Heart left ventricle (tissue), 16 donors: ENCODE measurements at regions of chr9 and their contacts with region 1.

Region 1: DNA sequence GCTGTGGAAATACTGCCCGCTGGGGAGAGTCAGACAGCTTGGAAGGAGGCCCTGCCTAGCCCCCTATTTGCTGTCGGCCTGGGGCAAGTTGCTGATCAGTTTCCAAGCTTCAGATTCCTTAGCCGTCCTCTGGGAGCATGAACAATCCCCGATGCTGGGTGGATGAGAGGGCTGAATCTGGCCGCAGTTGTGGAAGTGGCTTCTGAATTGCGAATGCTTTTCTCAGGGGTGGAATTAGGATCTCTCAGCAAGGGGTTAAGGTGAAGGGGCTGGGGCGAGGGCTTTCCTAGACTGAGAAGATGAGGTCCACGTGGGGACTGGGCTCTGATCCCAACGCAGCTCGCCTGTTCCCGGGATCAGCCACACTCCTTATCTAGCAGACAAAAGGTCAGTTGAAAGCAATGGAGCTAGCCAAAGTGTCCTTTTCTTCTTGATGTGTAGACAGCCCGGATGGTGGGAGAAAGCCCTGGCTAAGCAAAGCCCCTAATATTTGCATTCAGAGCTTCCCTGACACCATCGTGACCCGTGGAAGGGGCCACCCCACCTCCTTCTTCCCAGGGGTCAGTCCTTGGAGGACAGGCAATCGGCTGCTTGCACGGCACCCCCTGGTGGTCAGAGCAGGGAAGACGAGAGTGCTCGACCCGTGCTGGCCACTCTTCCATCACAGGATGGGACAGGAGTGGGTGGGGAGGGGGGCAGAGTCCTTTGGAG is 54.9 kb downstream of the COL15A1 start:
- DNase-seq: peak; percentile 86 to 92 (median 91)
- ATAC-seq: peak; percentile 83 to 87 (median 85)
- H3K4me3 ChIP-seq: peak overlapping the region in 2 of 12 donors; percentile 5 to 10
- H3K27ac ChIP-seq: peak overlapping the region; percentile 55 to 89 (median 78)
- H3K4me1 ChIP-seq: peaks cover 4 to 74% (median 56%) of the 10 kb centered on the region in 12 donors
- H3K27me3 ChIP-seq: no peaks in the 10 kb centered on the region
- CTCF ChIP-seq: peak; percentile 80 to 96 (median 91)
- POLR2A ChIP-seq: no peak

Region 2: DNA sequence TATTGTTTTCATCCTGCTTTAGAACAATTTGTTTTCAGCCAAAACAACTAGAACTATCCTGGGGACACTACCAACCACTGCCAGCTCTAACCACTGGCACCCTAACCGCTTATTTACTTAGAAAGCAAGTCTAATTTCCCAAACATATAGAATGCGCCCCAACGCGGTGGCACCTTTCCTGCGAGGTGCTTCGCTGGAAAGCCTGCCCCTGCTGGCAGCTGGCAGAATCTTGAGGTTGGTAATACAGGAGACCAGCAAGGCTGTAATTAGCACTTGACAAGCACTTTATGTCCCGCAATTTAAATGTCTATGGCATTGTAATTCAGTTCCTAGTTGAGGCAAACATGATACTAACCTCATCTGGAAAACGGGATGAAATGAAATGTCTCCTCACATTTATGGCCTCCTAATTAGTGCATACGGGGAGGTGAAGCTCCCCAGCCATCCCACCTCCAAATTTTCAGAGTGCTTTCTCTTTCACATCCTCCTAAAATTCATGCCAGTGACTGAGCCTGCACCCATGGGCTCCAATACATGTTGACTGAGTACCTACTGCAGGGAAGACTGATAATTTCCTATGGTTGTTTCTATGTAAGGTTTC is 320.3 kb before region 1 on chr9:
- intact Hi-C with region 1: no loop called
- DNase-seq: no peak
- ATAC-seq: no peak
- H3K4me3 ChIP-seq: no peak overlapping the region
- H3K27ac ChIP-seq: no peak overlapping the region
- H3K4me1 ChIP-seq: no peaks in the 10 kb centered on the region
- H3K27me3 ChIP-seq: peaks cover 0 to 7% (median 0%) of the 10 kb centered on the region in 9 donors
- CTCF ChIP-seq: peak in 8 of 12 donors; percentile 7 to 33 (median 25)
- POLR2A ChIP-seq: no peak

Region 3: DNA sequence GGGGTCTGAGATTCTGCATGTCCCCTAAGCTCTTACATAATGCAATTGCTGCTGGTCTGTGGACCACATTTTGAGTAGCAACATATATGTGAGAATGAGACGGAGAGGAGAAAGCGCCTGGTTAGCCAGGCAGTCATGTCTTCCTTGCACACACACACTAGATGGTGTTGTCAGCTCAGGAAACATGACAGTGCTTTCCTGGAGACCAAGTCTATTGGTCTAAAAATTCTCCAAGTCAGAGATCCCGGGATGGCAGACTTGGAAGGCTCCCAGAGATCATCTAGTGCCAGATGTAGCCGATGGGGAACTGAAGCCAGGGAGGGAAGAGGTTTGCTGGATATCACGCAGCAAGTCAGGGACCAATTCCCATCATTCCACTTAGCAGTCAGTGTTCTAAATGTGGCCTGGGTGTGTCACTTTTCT is 137.7 kb before region 1 on chr9:
- intact Hi-C with region 1: loop called (anchors 1 to 5 kb)
- DNase-seq: peak in 4 of 5 donors; percentile 82 to 90 (median 84)
- ATAC-seq: peak; percentile 78 to 94 (median 90)
- H3K4me3 ChIP-seq: no peak overlapping the region
- H3K27ac ChIP-seq: peak overlapping the region in 10 of 12 donors; percentile 23 to 85 (median 50)
- H3K4me1 ChIP-seq: peaks cover 4 to 64% (median 36%) of the 10 kb centered on the region in 12 donors
- H3K27me3 ChIP-seq: no peaks in the 10 kb centered on the region
- CTCF ChIP-seq: peak; percentile 39 to 90 (median 71)
- POLR2A ChIP-seq: no peak

Region 4: GRCh38 chr9:98974994-98975712 is 23.4 kb before region 1 on chr9:
- intact Hi-C with region 1: loop called in 7 of 10 experiments (anchors 1 to 2 kb)
- DNase-seq: peak; percentile 85 to 92 (median 86)
- ATAC-seq: peak; percentile 30 to 73 (median 71)
- H3K4me3 ChIP-seq: peak overlapping the region in 10 of 12 donors; percentile 14 to 46 (median 38)
- H3K27ac ChIP-seq: peak overlapping the region; percentile 53 to 91 (median 78)
- H3K4me1 ChIP-seq: peaks cover 6 to 97% (median 76%) of the 10 kb centered on the region in 12 donors
- H3K27me3 ChIP-seq: peaks cover 0 to 9% (median 0%) of the 10 kb centered on the region in 9 donors
- CTCF ChIP-seq: peak; percentile 94 to 100 (median 99)
- POLR2A ChIP-seq: peak in 1 of 2 donors; percentile 7

Region 5: DNA sequence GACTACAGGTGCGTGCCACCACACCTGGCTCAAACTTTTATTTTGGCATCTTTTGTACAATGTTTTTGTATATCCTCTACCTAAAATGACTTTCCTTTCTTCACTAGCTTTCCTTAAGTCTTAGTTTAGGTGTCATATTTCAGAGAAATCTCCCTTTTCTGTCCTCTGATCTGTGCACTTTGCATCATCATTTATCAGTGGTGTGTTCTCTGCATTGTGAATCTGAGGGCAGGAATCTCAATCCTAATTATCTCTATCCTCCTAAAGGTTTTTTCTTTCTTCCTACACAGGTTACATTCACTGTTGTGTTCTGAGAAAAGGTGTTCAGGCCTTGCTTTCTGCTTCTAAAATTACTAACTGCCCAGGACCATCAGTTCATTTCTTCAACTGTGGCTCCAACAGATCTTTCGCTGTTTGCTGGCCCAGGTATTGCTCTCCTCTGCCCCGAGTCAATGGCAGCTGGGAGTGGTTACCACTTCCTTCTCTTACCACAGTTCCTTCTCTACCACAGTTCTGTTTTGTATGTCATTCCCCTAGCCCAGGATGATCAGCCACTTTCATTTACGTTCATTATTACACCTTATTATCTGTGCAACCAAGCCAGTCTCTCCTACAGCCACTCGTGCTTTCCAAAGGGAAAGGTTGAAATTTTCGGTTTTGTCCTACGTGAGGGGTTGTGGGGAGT is 120.3 kb after region 1 on chr9:
- intact Hi-C with region 1: loop called in 1 of 10 experiments (anchors 10 kb)
- DNase-seq: no peak
- ATAC-seq: peak in 3 of 4 donors; percentile 37 to 80 (median 47)
- H3K4me3 ChIP-seq: no peak overlapping the region
- H3K27ac ChIP-seq: peak overlapping the region in 1 of 12 donors; percentile 43
- H3K4me1 ChIP-seq: peaks cover 0 to 74% (median 41%) of the 10 kb centered on the region in 12 donors
- H3K27me3 ChIP-seq: no peaks in the 10 kb centered on the region
- CTCF ChIP-seq: no peak
- POLR2A ChIP-seq: no peak

Region 6: GRCh38 chr9:99140685-99141314 is 142.2 kb after region 1 on chr9:
- intact Hi-C with region 1: loop called (anchors 1 to 5 kb)
- DNase-seq: peak in 4 of 5 donors; percentile 31 to 49 (median 36)
- ATAC-seq: peak in 3 of 4 donors; percentile 85 to 90 (median 89)
- H3K4me3 ChIP-seq: no peak overlapping the region
- H3K27ac ChIP-seq: peak overlapping the region in 3 of 12 donors; percentile 10 to 48 (median 23)
- H3K4me1 ChIP-seq: peaks cover 0 to 47% (median 6%) of the 10 kb centered on the region in 12 donors
- H3K27me3 ChIP-seq: no peaks in the 10 kb centered on the region
- CTCF ChIP-seq: peak; percentile 75 to 95 (median 88)
- POLR2A ChIP-seq: no peak